ENCODE measurements at regions of chr3 and their contacts with region 1.

Region 1: DNA sequence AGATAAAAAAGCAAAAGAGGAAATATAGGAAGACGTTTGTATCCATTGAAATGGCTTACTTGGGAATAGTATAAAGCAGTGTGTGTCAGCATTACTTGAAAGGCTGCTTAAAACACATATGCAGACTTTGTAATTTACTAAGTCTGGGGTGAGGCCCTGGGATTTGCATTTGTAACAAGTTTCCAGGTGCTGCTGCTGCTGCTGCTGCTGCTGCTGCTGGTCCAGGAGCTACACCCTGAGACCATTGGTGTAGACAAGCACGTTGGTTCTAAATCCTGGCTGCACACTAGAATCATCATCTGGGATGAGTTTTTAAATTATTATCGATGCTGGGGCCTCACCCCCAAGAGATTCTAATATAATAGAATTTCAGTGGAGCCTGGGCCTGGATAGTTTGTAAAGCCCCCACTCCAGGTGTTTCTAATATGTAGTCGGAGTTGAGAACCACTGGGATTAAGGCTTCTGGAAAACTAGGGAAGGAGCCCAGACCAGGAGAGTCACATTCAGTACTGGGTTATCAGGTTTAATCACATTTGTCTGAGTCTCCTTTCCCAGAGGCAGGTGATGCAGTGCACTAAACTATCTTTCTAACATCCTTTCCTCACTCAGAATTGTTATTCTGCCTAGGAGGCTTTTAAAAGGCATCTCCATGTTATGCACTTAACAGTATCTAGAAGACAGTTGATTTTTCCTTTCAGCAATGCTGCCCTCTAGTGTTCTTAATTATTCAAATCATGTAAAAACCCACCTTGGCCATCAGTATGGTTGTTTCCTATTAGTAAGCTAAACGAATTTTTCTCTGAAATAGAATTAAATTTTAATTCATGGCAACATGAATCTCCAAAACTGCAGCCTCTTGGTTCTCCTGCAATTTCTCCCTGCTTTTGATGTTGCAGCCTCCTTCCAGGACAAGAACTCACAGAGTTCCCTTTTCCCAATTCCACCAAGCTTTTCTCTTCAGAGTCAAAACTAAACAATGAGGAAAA is 45.4 kb downstream of the SSR3 start:
- H3K4me3 ChIP-seq: no peak overlapping the region
- H3K27ac ChIP-seq: no peak overlapping the region
- H3K4me1 ChIP-seq: no peaks in the 10 kb centered on the region
- CTCF ChIP-seq: no peak

Region 2: GRCh38 chr3:156174229-156174847 is 335.1 kb before region 1 on chr3:
- CTCF ChIA-PET with region 1: interaction called, 20 read pairs
- POLR2A ChIA-PET with region 1: no interaction called
- H3K4me3 ChIP-seq: no peak overlapping the region
- H3K27ac ChIP-seq: no peak overlapping the region
- H3K4me1 ChIP-seq: no peaks in the 10 kb centered on the region
- CTCF ChIP-seq: no peak

Region 3: GRCh38 chr3:156253150-156253549 is 256.3 kb before region 1 on chr3:
- CTCF ChIA-PET with region 1: no interaction called
- POLR2A ChIA-PET with region 1: no interaction called
- H3K4me3 ChIP-seq: no peak overlapping the region
- H3K27ac ChIP-seq: no peak overlapping the region
- H3K4me1 ChIP-seq: no peaks in the 10 kb centered on the region
- CTCF ChIP-seq: no peak

Region 4: DNA sequence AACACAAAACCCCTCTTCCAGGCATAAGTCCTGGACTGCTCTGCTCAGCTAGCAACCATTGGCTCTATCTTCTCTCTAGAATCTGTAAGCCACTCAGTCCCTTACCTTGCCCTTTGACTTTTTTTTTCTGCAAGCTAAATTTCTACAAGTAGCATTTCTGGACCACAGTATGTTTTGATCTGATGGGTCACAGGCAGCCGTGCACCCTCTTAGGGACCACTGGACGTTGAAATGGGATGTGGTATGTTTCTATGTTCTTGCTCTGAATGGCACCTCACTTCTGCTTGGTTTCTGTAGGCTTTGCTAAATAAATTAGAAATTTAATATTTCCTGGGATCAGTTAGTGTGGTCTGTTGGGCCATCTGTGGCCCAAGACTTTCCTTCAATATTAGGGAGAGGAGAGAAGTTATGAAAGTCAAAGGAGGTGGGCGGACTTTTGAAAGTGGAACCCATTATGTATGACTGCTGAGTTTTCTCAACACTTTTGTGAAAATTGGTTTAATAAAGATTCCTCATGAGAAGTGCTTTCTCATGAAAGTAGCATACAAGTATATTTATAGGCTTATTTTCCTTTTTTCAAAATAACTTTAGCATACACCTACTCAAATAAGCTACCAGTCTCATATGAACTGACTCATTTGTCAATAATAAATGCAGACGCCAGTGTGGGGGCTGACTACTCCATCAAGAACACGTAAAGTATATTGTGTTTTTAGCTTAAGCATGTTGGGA is 146.5 kb after region 1 on chr3:
- CTCF ChIA-PET with region 1: no interaction called
- POLR2A ChIA-PET with region 1: no interaction called
- H3K4me3 ChIP-seq: no peak overlapping the region
- H3K27ac ChIP-seq: no peak overlapping the region
- H3K4me1 ChIP-seq: peaks cover 5% of the 10 kb centered on the region
- CTCF ChIP-seq: no peak

Measured in HEK293 (cell line).